ENCODE measurements at regions of chr1 and their contacts with region 1.

Region 1: DNA sequence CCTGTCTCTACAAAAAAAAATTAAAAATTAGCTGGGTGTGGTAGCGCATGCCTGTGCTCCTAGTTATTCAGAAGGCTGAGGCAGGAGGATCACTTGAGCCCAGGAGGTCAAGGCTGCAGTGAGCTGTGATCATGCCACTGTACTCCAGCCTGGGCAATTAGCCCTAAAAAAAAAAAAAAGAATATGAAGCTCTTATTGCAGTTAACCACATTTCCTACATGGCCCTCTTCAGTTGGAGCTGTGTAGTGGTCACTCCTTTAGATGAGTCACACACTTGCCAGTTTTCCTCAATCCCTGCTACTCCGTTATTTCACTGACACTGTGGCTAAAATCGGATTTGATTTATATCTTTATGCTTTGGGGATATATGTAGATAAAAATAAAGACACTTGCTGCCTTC is 11.8 kb downstream of the NFYC start:
- DNase-seq: no peak
- ATAC-seq: peak; percentile 83
- H3K4me3 ChIP-seq: no peak overlapping the region
- H3K27ac ChIP-seq: 0 out of 2 replicates have a peak overlapping the region, but pooled peaks have one; percentile 22
- H3K4me1 ChIP-seq: peaks cover 21 to 39% of the 10 kb centered on the region in 2 experiments
- H3K27me3 ChIP-seq: no peaks in the 10 kb centered on the region
- CTCF ChIP-seq: no peak
- POLR2A ChIP-seq: no peak
- RAD21 ChIP-seq: no peak

Region 2: GRCh38 chr1:40691538-40692428 is 11.5 kb before region 1 on chr1 and contains the start of gene NFYC:
- CTCF ChIA-PET with region 1: interaction called, 6 read pairs
- POLR2A ChIA-PET with region 1: interaction called, 32 read pairs
- RAD21 ChIA-PET with region 1: no interaction called
- intact Hi-C with region 1: no loop called
- DNase-seq: peak; percentile 98
- ATAC-seq: peak; percentile 92
- H3K4me3 ChIP-seq: peak within 1 kb of the TSS; percentile 68 to 76
- H3K27ac ChIP-seq: peak within 1 kb of the TSS; percentile 98
- H3K4me1 ChIP-seq: peaks cover 4 to 18% of the 10 kb centered on the region in 2 experiments; a peak in 3 of 4 replicates
- H3K27me3 ChIP-seq: no peaks in the 10 kb centered on the region
- CTCF ChIP-seq: 0 out of 6 replicates have a peak, but pooled peaks of 1 of the 3 experiments have one; percentile 4
- POLR2A ChIP-seq: peak; percentile 73
- RAD21 ChIP-seq: no peak
- total RNA-seq, gene NFYC: 63.3 TPM